ENCODE measurements at regions of chr9 and their contacts with region 1.

Region 1: GRCh38 chr9:130107234-130107861 is 53.6 kb downstream of the GPR107 start:
- DNase-seq: peak; percentile 19 to 89
- H3K4me3 ChIP-seq: no peak overlapping the region
- H3K27ac ChIP-seq: no peak overlapping the region
- H3K4me1 ChIP-seq: peaks cover 0 to 3% (median 0%) of the 10 kb centered on the region in 4 experiments; a peak in 1 of 7 replicates
- H3K27me3 ChIP-seq: no peaks in the 10 kb centered on the region
- CTCF ChIP-seq: peak; percentile 56 to 86 (median 84)
- EP300 ChIP-seq: no peak
- POLR2A ChIP-seq: no peak
- RAD21 ChIP-seq: peak; percentile 91

Region 2: DNA sequence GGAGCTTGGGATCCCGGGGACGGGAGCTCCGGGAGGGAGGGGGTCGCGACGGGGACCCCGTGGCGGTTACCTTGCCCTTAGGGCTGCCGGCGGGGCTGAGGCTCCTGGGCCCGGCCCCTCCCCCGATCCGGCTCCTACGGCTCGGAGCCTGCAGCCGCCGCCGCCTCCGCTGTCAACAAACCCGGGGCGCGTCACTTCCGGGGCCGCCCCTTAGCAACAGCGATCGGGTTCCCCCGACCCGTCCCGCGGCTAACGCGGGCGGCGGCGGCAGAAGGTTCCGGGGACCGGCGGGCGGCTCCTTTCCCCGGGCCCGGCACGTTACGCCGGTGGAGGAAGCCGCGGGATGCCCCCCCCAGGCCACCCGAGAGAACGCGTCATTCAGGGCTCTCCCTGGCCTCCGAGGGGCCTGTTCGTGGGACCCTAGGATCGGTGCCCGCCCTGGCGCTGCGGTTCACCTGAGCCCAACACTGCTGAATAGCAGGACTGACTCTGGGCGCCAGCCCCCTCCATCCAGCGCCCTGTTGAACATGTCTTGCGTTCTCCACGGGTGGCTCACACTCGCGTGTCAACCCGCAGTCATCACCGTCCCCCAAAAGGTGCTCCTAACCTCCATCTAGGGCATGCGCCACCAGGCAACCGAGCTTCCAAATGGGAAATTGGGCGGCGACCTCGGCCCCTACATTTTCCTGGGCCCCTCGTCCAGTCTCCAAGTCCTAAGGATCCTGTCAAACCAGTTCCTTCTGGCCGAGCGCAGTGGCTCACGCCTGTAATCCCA is 1335.4 kb before region 1 on chr9 and contains the start of gene ZER1:
- CTCF ChIA-PET with region 1: no interaction called
- POLR2A ChIA-PET with region 1: no interaction called
- DNase-seq: peak; percentile 53 to 97
- H3K4me3 ChIP-seq: peak within 1 kb of the TSS; percentile 75 to 97 (median 90)
- H3K27ac ChIP-seq: peak within 1 kb of the TSS; percentile 85
- H3K4me1 ChIP-seq: peaks cover 0 to 3% (median 1%) of the 10 kb centered on the region in 4 experiments; a peak in 3 of 7 replicates
- H3K27me3 ChIP-seq: no peaks in the 10 kb centered on the region
- CTCF ChIP-seq: no peak
- EP300 ChIP-seq: peak in 1 of 2 experiments; percentile 87; a peak in 1 of 3 replicates
- POLR2A ChIP-seq: peak in 1 of 2 experiments; percentile 79; a peak in 2 of 3 replicates
- RAD21 ChIP-seq: peak in 1 of 2 experiments; percentile 7; a peak in 1 of 4 replicates
- total RNA-seq, gene ZER1: 20.5 and 22.6 TPM in 2 replicates

Region 3: GRCh38 chr9:130118841-130119518 is 11.6 kb after region 1 on chr9:
- CTCF ChIA-PET with region 1: interaction called, 35 read pairs
- POLR2A ChIA-PET with region 1: no interaction called
- DNase-seq: no peak
- H3K4me3 ChIP-seq: no peak overlapping the region
- H3K27ac ChIP-seq: no peak overlapping the region
- H3K4me1 ChIP-seq: peaks cover 5 to 15% (median 10%) of the 10 kb centered on the region in 4 experiments
- H3K27me3 ChIP-seq: no peaks in the 10 kb centered on the region
- CTCF ChIP-seq: no peak
- EP300 ChIP-seq: no peak
- POLR2A ChIP-seq: no peak
- RAD21 ChIP-seq: no peak

Region 4: GRCh38 chr9:130124085-130124860 is 16.9 kb after region 1 on chr9:
- CTCF ChIA-PET with region 1: interaction called, 35 read pairs
- POLR2A ChIA-PET with region 1: no interaction called
- DNase-seq: no peak
- H3K4me3 ChIP-seq: no peak overlapping the region
- H3K27ac ChIP-seq: no peak overlapping the region
- H3K4me1 ChIP-seq: peaks cover 0 to 3% (median 0%) of the 10 kb centered on the region in 4 experiments; a peak in 1 of 7 replicates
- H3K27me3 ChIP-seq: peaks cover 0 to 1% (median 0%) of the 10 kb centered on the region in 4 experiments; a peak in 1 of 7 replicates
- CTCF ChIP-seq: no peak
- EP300 ChIP-seq: no peak
- POLR2A ChIP-seq: no peak
- RAD21 ChIP-seq: no peak

Region 5: GRCh38 chr9:130186839-130187522 is 79.6 kb after region 1 on chr9:
- CTCF ChIA-PET with region 1: interaction called, 11 read pairs
- POLR2A ChIA-PET with region 1: interaction called, 4 read pairs
- DNase-seq: peak; percentile 39 to 75
- H3K4me3 ChIP-seq: no peak overlapping the region
- H3K27ac ChIP-seq: no peak overlapping the region
- H3K4me1 ChIP-seq: peaks cover 0 to 44% (median 35%) of the 10 kb centered on the region in 4 experiments; a peak in 6 of 7 replicates
- H3K27me3 ChIP-seq: no peaks in the 10 kb centered on the region
- CTCF ChIP-seq: no peak
- EP300 ChIP-seq: no peak
- POLR2A ChIP-seq: no peak
- RAD21 ChIP-seq: no peak

Region 6: DNA sequence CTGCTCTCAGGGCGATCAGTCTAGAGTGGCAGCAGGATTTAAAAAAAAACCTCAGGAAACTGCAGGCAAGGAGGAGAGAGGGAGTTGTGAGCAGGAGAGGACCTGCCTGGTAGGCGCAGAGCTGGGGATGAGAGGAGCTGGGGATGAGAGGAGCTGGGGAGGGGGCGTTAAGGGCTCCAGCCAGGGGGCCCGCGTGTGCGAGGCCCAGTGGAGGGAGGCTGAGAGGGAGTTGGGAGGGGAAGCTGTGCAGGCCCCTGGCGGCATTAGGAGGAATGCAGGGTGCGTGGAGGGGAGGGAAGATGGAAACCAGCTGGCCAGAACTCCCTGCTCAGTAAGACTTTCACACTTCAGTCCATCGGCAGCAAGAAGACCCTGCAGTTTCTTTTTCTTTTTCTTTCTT is 113.0 kb after region 1 on chr9:
- CTCF ChIA-PET with region 1: interaction called, 10 read pairs
- POLR2A ChIA-PET with region 1: no interaction called
- DNase-seq: no peak
- H3K4me3 ChIP-seq: no peak overlapping the region
- H3K27ac ChIP-seq: no peak overlapping the region
- H3K4me1 ChIP-seq: peaks cover 0 to 7% (median 0%) of the 10 kb centered on the region in 4 experiments; a peak in 5 of 7 replicates
- H3K27me3 ChIP-seq: no peaks in the 10 kb centered on the region
- CTCF ChIP-seq: peak in 2 of 3 experiments; percentile 10 to 29; a peak in 2 of 4 replicates
- EP300 ChIP-seq: no peak
- POLR2A ChIP-seq: no peak
- RAD21 ChIP-seq: peak; percentile 14 to 22; a peak in 2 of 4 replicates

Region 7: DNA sequence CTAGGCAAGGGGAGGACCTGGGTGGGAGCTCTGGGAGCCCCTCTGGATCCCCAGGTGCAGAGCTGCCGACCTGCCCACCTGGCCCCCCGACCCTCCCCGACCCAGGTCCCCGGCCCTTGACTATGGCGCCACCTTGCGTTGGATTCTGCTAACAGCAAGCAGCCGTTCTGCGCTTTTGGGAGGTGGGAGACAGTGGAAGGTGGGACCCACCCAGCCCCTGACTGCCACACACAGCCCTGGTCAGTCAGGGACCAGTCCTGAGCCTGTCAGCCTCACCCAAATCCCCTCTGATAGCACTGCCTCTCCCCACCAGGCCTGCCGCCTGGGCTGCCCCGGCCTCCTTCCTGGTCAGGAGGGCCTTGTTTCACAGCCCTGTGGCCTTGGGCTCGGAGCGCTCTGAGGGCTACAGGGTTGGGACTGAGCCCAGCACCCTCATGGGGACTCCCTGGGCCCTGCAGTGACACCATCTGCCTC is 236.1 kb after region 1 on chr9:
- CTCF ChIA-PET with region 1: interaction called, 45 read pairs
- POLR2A ChIA-PET with region 1: no interaction called
- DNase-seq: peak in 1 of 2 experiments; percentile 95
- H3K4me3 ChIP-seq: no peak overlapping the region
- H3K27ac ChIP-seq: no peak overlapping the region
- H3K4me1 ChIP-seq: peaks cover 0 to 12% (median 6%) of the 10 kb centered on the region in 4 experiments; a peak in 4 of 7 replicates
- H3K27me3 ChIP-seq: no peaks in the 10 kb centered on the region
- CTCF ChIP-seq: peak in 2 of 3 experiments; percentile 78 to 88; a peak in 3 of 4 replicates
- EP300 ChIP-seq: no peak
- POLR2A ChIP-seq: no peak
- RAD21 ChIP-seq: peak; percentile 94 to 96

Measured in H1 (cell line).